ENCODE measurements at regions of chr1 and their contacts with region 1.

Region 1: DNA sequence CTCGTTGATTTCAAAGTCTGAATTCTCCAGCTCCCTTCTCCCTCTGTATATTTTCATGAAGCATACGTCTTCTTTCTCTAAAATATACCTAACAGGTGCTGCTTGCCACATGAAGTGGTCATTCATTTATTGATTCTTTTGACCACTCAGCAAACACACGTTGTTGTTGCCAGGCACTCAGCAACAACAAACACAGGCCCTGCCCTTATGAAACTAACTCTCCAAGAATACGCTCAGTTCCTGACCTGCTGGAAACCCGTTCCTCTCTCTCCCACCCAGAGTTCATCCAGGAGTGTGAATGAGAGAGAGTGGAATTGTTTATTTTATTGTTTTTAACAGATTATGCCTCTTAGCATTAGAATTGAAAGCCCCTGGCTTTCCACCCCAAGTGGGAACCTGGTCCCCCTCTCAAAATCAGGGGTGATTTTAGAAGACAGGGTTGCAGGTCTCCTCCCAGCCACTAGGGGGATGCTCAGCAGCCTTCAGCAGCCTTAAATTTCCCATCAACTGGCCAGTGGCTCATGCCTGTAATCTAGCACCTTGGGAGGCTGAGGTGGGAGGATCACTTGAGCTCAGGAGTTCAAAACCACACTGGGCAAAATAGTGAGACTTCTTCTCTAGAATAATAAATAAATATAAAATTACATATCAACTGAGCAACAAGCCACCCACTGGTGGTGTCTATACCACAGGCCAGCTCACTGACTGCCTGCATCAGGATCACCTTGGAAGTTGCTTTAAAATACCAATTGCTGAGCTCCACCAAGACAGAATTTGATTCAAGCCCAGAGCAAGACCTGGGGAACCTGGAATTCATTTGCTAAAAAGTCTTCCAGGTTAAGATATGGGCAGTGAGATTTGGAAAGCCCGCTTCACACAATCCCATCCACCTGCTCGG is 181.0 kb upstream of the KLHDC7A start:
- DNase-seq: no peak
- ATAC-seq: no peak
- H3K4me3 ChIP-seq: no peak overlapping the region
- H3K27ac ChIP-seq: no peak overlapping the region
- H3K4me1 ChIP-seq: no peaks in the 10 kb centered on the region
- H3K27me3 ChIP-seq: peaks cover 0 to 74% (median 68%) of the 10 kb centered on the region in 7 donors
- CTCF ChIP-seq: peak; percentile 27 to 77 (median 53)

Region 2: DNA sequence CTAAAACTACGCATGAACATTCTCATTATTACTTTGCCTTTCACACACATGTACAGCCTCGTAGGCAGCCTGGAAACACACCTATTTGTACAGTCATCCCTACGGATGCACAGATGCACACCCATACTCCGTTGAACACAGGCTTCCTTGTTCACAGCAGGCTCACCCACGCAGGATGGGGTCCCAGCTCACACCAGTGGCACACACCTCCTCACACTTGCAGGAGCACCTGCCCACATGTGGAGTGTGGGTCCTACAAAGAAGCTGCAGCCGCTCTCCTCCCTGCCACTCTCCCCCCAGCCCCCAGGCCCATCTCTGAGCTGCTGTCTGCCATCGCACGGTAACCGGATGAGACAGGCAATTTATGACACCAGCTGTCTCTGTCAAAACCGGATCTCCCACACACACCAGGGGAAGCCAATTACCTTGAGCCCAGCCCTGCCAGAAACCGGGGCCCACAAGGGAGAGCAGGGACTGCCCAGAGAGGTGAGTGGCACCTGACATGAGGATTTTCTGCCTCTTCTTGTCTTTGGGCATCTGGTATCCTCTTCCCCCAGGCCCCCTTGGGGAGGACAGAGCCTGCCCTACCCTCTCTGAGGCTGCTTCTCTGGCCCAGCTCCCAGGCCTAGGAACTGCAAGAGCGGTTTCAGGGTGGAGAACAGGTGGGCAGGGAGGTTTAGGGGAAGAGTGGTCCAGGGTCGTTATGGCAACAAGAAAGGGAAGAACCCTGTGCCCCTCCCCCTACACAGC is 16.7 kb before region 1 on chr1:
- intact Hi-C with region 1: no loop called
- DNase-seq: no peak
- ATAC-seq: no peak
- H3K4me3 ChIP-seq: no peak overlapping the region
- H3K27ac ChIP-seq: no peak overlapping the region
- H3K4me1 ChIP-seq: no peaks in the 10 kb centered on the region
- H3K27me3 ChIP-seq: peaks cover 0 to 85% (median 58%) of the 10 kb centered on the region in 7 donors
- CTCF ChIP-seq: no peak

Region 3: GRCh38 chr1:18575620-18576019 is 275.9 kb after region 1 on chr1:
- intact Hi-C with region 1: loop called in 2 of 10 experiments (anchors 10 kb)
- DNase-seq: peak; percentile 38 to 75
- ATAC-seq: peak in 5 of 8 donors; percentile 15 to 61 (median 55)
- H3K4me3 ChIP-seq: no peak overlapping the region
- H3K27ac ChIP-seq: no peak overlapping the region
- H3K4me1 ChIP-seq: no peaks in the 10 kb centered on the region
- H3K27me3 ChIP-seq: peaks cover 0 to 54% (median 31%) of the 10 kb centered on the region in 7 donors
- CTCF ChIP-seq: peak in 8 of 9 donors; percentile 20 to 84 (median 68)

Measured in heart right ventricle (tissue), 16 donors.